ENCODE measurements at regions of chr20 and their contacts with region 1.

Region 1: DNA sequence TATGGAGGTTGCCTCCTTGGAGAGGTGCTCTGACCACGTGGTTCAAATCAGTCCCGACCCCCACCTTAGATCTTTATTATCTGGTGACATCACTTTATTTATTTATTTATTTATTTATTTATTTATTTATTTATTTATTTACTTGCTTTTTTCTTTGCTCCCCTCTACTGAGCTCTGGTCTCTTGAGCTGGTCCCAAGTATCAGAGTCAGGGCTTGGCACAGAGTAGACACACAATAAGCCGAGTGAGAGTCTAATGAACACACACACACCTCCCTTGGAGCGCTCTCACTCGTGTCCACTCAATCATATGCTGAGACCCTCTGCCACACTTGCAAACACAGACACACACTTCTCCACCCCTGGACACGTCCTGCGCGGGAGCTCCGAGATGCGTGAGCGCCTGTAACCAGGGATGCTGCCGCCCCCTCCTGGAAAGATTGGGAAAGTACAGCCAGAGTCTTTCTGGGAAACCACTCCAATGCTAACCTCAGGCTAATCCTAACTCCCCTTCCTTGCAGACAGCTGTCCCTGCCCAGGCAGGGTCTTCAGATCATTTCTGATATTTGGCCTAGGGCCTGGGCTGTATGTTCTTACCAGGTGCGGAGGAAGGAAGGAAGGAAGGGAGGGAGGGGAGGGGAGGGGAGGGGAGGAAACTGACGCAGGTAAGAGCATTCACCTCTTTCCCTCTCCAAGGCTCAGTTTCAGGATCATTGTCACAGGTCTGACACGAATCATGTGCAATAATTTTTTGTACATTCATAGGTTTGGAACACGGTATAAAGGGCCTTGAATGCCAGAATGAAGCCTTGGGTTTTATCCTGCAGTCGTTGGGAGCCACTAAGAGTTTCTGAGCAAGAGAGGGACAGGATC is 70.9 kb downstream of the STK35 start:
- DNase-seq: peak; percentile 36
- ATAC-seq: peak; percentile 82
- H3K4me3 ChIP-seq: peak overlapping the region in 1 of 2 experiments; percentile 6; a peak in 1 of 4 replicates
- H3K27ac ChIP-seq: no peak overlapping the region
- H3K4me1 ChIP-seq: 0 out of 2 replicates have a peak, but pooled peaks cover 4% of the 10 kb centered on the region
- H3K27me3 ChIP-seq: no peaks in the 10 kb centered on the region; the same call in 1 of the 2 replicates
- CTCF ChIP-seq: peak; percentile 93

Region 2: DNA sequence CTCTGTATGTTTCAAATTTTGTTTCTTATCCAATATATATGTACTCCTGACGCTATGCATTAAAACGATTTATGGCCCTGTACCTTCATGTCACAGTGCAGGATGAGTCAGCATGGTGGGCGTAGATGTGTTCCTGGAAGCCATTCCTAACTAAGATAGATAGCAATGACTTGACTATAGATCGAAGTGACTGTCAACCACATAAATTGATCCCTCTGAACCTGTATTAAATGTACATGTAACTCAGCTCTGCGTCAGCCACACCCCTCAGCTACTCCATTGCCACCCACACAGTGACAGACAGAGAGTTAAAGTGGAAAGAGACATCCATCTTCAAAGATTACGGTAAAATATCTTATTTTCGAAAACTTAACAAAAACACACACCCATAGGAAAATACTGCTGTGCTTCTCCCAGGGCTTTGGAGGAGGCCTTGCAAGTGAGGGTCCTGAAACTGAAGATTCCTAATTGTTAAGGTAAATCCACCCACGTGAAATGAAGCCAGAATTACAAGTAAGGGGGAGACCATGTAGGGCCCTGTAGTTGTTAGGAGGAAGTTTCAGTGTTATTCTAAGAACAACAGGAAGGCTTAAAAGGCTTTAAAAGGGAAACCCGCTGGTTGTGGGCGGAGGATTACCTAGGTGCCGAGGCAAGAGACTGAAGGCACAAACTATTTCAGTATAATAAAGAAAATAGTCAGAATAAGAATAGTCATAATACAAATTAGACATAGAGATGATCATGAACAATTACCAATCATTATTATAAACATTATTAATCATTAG is 957.0 kb before region 1 on chr20:
- CTCF ChIA-PET with region 1: no interaction called
- POLR2A ChIA-PET with region 1: no interaction called
- in situ Hi-C with region 1: no loop called
- intact Hi-C with region 1: no loop called
- DNase-seq: no peak
- ATAC-seq: no peak
- H3K4me3 ChIP-seq: no peak overlapping the region
- H3K27ac ChIP-seq: no peak overlapping the region
- H3K4me1 ChIP-seq: 0 out of 2 replicates have a peak, but pooled peaks cover 2% of the 10 kb centered on the region
- H3K27me3 ChIP-seq: peaks cover 13% of the 10 kb centered on the region
- CTCF ChIP-seq: no peak

Region 3: GRCh38 chr20:1965520-1966351 is 206.8 kb before region 1 on chr20:
- CTCF ChIA-PET with region 1: interaction called, 3 read pairs
- POLR2A ChIA-PET with region 1: no interaction called
- in situ Hi-C with region 1: no loop called
- intact Hi-C with region 1: loop called (anchors 1 kb)
- DNase-seq: peak; percentile 18
- ATAC-seq: peak; percentile 94
- H3K4me3 ChIP-seq: no peak overlapping the region; a peak in 1 of 4 replicates
- H3K27ac ChIP-seq: no peak overlapping the region
- H3K4me1 ChIP-seq: no peaks in the 10 kb centered on the region
- H3K27me3 ChIP-seq: peaks cover 16% of the 10 kb centered on the region
- CTCF ChIP-seq: peak; percentile 97

Region 4: DNA sequence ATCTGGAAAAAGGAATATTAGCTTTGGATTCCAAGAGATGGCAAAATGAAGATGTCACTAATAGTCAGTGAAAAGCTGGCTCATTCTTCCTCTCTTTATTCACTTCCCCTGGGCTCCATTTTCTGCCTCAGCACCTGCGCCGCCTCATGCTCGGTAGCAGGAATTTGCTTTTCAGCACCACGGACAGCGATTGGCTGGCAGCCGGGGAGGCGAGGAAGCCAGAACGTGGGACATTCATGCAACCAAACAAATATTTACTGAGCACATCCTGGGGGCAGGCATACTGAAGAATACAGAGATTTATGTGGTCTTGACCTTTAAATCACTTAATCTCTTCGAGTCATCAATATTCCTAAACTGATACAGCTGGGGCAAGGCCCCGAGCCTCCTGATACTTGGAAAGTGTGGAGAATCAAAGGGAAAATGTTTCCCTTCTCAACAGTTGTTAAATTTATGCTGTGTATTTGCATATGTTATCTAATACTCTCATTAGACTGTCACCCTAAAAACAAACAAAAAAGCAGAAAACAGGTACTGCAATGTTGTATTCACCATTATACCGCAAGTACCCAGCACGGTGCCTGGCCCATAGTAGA is 166.6 kb before region 1 on chr20:
- CTCF ChIA-PET with region 1: interaction called, 4 read pairs
- POLR2A ChIA-PET with region 1: no interaction called
- in situ Hi-C with region 1: no loop called
- intact Hi-C with region 1: loop called (anchors 5 kb)
- DNase-seq: no peak
- ATAC-seq: no peak
- H3K4me3 ChIP-seq: no peak overlapping the region
- H3K27ac ChIP-seq: no peak overlapping the region
- H3K4me1 ChIP-seq: no peaks in the 10 kb centered on the region
- H3K27me3 ChIP-seq: peaks cover 21% of the 10 kb centered on the region
- CTCF ChIP-seq: no peak

Region 5: DNA sequence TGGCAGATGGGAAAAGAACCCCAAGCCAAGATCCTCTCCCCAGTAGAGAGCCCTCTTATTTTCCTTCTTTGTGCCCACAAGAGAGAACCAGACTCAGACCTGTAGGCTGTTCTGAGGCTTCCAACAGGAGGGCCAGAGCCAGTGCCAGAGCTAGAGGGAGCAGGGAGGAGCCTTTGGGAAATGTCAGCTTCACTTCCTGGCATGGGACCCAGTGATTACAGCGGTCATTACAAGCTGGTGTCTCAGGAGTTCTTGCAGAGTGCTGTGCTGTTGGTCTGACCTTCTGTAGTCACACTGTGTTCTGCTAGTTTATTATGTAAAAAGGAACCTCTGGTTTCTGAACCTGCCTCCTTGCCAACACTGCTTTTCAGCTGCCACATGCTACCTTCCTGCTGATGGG is 32.0 kb before region 1 on chr20:
- CTCF ChIA-PET with region 1: no interaction called
- POLR2A ChIA-PET with region 1: no interaction called
- in situ Hi-C with region 1: no loop called
- intact Hi-C with region 1: no loop called
- DNase-seq: no peak
- ATAC-seq: no peak
- H3K4me3 ChIP-seq: no peak overlapping the region
- H3K27ac ChIP-seq: no peak overlapping the region
- H3K4me1 ChIP-seq: no peaks in the 10 kb centered on the region
- H3K27me3 ChIP-seq: no peaks in the 10 kb centered on the region
- CTCF ChIP-seq: no peak

Measured in Panc1 (cell line).